Activated T-helper 1 cell treated with anti-CD3 and anti-CD28 coated beads, Interleukin-12 subunit alpha, Interleukin-12 subunit beta, Interleukin-2, Interleukin-4 antibody, amounts not matched to agents 30 ng/mL and 10 ng/mL and 1 ng/mL, durations not matched to agents 14 hours and 24 hours and 36 hours (primary cell): ENCODE measurements at regions of chr4 and their contacts with region 1.

Region 1: DNA sequence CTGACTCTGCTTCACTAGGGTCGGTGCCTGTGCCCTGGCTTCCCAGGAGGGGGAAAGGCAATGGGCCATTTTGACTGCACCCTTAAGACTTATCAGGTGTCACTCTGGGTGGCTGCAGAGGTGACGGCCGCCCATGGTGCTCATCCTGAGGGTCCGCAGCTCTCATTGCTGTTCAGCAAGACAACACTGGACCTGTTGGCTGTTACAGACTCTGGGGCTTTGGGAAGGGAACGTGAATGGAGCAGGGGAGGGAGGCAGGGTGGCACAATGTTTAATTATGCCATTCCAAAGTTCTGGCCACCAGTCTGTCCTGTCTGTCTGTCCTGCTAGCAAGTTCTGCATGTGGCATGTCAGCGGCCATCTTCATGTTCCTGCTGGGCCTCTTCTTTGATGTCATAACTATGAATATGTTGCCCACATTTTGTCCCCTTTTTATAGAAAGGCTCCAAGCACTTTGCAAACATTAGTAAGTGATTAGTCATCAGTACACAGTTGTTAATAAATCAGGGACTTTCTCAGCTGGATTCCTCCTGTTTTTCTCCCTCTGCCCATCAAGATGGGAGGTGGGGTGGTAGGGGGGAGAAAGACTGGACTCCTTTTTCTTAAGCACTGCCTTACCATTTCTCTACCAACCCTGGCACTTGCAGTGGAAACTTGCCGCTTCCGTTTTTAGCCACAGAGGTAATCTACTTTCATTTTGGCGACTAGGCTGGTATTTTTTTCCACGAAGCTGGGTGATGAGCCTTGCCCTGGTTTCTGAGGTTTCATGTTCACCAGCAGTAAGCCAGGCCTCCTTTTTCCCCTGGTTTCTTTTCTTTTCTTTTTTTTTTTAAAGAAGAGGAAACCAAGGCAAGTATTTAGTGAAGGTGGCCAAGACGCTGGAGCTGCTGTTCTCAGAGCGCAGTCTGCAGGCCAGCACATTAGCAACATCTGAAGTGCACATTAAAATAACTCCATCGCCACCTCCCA is 88.6 kb upstream of the TRIM2 start:
- DNase-seq: peak; percentile 69
- H3K4me3 Mint-ChIP-seq: peak overlapping the region; percentile 56
- H3K27ac Mint-ChIP-seq: peak overlapping the region; percentile 80
- H3K4me1 Mint-ChIP-seq: no peaks in the 10 kb centered on the region
- H3K27me3 Mint-ChIP-seq: peaks cover 6% of the 10 kb centered on the region

Region 2: DNA sequence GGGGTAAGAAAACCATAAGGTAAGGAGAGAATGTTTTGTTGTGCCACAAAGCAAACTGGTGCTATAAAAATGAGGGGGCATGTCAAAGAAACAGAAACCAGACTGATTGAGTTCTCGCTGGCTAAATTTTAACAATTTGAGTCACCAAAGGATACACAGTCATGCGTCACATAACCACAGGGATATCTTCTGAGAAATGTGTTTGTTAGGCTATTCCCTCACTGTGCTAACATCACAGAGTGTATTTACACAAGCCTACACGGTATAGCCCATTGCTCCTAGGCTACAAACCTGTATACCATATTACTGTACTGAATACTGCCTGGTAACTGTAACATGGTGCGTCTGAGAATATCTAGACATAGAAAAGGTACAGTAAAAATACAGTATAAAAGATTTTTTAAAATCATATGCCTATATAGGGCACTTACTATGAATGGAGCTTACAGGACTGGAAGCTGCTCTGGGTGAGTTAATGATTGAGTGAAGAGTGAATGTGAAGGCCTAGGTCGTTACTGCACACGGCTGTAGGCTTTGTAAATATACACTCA is 629.8 kb before region 1 on chr4:
- intact Hi-C with region 1: loop called (anchors 10 kb)
- DNase-seq: peak; percentile 60
- H3K4me3 Mint-ChIP-seq: peak overlapping the region; percentile 40
- H3K27ac Mint-ChIP-seq: peak overlapping the region; percentile 77
- H3K4me1 Mint-ChIP-seq: peaks cover 48% of the 10 kb centered on the region
- H3K27me3 Mint-ChIP-seq: no peaks in the 10 kb centered on the region

Region 3: DNA sequence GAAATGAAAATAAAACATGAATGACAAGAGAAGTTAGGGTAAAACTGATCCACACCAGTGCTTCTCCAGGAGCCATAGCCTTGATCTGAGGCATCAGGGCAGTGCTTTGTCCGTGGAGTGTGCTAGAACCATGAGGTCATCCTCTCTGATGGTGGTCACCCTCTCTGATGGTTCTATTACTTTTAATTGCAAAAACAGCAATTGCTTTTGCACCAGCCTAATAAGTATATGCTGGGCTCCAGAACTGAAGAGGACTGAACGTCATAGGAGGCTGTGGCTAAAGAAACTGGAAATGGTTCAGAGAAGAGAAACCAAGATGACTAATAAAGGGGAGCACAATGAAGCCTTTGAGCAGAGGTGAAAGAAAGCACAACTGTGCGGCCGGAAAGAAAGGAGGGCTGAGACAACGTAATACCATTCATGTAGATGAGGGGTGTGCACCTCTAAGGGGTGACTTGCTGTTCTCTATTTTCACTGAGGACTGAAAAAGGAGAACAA is 418.8 kb before region 1 on chr4:
- intact Hi-C with region 1: no loop called
- DNase-seq: peak; percentile 64
- H3K4me3 Mint-ChIP-seq: no peak overlapping the region
- H3K27ac Mint-ChIP-seq: no peak overlapping the region
- H3K4me1 Mint-ChIP-seq: peaks cover 23% of the 10 kb centered on the region
- H3K27me3 Mint-ChIP-seq: peaks cover 13% of the 10 kb centered on the region

Region 4: GRCh38 chr4:152807294-152807829 is 308.2 kb before region 1 on chr4:
- intact Hi-C with region 1: loop called (anchors 1 kb)
- DNase-seq: no peak
- H3K4me3 Mint-ChIP-seq: peak overlapping the region; percentile 32
- H3K27ac Mint-ChIP-seq: peak overlapping the region; percentile 54
- H3K4me1 Mint-ChIP-seq: peaks cover 20% of the 10 kb centered on the region
- H3K27me3 Mint-ChIP-seq: no peaks in the 10 kb centered on the region

Region 5: DNA sequence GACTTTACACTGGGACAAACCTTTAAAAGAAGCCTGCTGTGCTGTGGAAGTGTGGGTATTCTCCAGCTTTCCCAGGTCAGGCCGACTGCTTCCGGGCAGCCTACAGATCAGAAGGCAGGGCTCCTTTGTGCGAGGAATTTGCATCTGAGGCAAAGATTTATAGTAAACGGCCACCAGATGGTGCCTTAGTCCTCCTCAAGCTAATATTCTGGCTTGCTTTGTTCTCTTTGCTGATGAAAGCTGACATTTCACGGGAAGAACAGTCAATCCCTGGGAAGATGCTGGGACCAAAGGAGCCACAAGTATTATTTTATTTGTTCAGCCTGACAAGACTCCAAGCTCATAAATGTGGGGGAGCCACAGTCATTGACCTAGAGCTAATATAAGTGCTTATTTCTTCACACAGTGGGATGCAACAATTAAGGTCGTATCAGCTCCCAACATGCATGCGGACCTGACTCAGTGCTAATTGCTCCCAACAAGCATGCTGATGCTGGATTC is 32.1 kb before region 1 on chr4:
- intact Hi-C with region 1: loop called (anchors 1 kb)
- DNase-seq: peak; percentile 11
- H3K4me3 Mint-ChIP-seq: no peak overlapping the region
- H3K27ac Mint-ChIP-seq: no peak overlapping the region
- H3K4me1 Mint-ChIP-seq: peaks cover 19% of the 10 kb centered on the region
- H3K27me3 Mint-ChIP-seq: peaks cover 28% of the 10 kb centered on the region

Region 6: GRCh38 chr4:153153339-153153871 is 37.8 kb after region 1 on chr4:
- intact Hi-C with region 1: loop called (anchors 2 kb)
- DNase-seq: peak; percentile 70
- H3K4me3 Mint-ChIP-seq: peak overlapping the region; percentile 82
- H3K27ac Mint-ChIP-seq: peak overlapping the region; percentile 67
- H3K4me1 Mint-ChIP-seq: peaks cover 59% of the 10 kb centered on the region
- H3K27me3 Mint-ChIP-seq: peaks cover 42% of the 10 kb centered on the region